ENCODE measurements at regions of chr5 and their contacts with region 1.

Region 1: DNA sequence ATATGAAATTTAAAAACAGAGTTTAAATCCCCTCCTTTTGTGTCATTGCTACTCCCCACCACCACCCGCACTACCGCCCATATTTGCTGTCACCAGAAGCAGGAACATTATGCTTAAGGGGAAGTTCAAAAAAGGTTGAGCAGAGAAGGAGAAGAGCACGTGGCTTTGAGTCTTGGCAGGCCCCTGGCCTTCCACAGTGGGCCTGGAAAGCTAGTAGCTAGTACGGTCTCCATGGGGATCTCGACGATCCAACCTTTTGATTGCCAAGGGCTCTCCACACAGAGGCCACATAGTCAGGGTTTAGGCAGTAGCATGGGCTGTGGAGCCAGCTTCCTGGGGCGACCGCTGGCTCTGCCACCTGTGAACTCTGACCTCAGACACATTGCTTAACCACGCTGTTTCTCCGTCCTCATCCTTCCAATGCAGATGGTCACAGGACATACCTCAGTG is 90.1 kb downstream of the GOLPH3 start:
- DNase-seq: no peak
- ATAC-seq: peak; percentile 41 to 78 (median 62)
- H3K4me3 ChIP-seq: no peak overlapping the region
- H3K27ac ChIP-seq: no peak overlapping the region
- H3K4me1 ChIP-seq: peaks cover 0 to 8% (median 0%) of the 10 kb centered on the region in 9 donors
- H3K27me3 ChIP-seq: no peaks in the 10 kb centered on the region
- CTCF ChIP-seq: no peak

Region 2: DNA sequence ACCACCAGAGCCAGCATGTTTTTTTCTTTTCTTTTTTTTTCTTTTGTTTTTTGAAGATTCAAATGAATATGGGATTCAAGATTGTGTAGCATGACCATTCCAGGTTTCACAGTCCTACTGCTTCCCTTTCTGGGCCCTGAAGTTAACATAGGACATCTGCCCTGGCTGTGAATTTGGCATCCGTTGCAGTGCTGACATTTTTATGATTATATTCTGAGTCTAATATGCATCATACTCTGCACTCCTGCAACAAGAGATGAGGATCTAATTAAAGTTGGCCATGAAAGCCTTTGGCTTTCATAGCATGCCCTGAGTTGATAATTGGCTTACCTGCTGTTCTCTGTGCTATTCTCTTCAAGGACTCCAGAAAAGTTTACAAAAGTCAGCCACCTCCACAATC is 522.1 kb before region 1 on chr5:
- intact Hi-C with region 1: loop called in 1 of 10 experiments (anchors 10 kb)
- DNase-seq: no peak
- ATAC-seq: peak in 1 of 8 donors; percentile 30
- H3K4me3 ChIP-seq: no peak overlapping the region
- H3K27ac ChIP-seq: no peak overlapping the region
- H3K4me1 ChIP-seq: peaks cover 0 to 15% (median 7%) of the 10 kb centered on the region in 9 donors
- H3K27me3 ChIP-seq: no peaks in the 10 kb centered on the region
- CTCF ChIP-seq: no peak

Region 3: GRCh38 chr5:31825518-31826068 is 258.4 kb before region 1 on chr5:
- intact Hi-C with region 1: loop called in 4 of 10 experiments (anchors 5 to 10 kb)
- DNase-seq: peak in 1 of 2 donors; percentile 61
- ATAC-seq: peak; percentile 69 to 92 (median 82)
- H3K4me3 ChIP-seq: no peak overlapping the region
- H3K27ac ChIP-seq: no peak overlapping the region
- H3K4me1 ChIP-seq: peaks cover 0 to 20% (median 13%) of the 10 kb centered on the region in 9 donors
- H3K27me3 ChIP-seq: no peaks in the 10 kb centered on the region
- CTCF ChIP-seq: peak; percentile 36 to 87 (median 71)

Region 4: DNA sequence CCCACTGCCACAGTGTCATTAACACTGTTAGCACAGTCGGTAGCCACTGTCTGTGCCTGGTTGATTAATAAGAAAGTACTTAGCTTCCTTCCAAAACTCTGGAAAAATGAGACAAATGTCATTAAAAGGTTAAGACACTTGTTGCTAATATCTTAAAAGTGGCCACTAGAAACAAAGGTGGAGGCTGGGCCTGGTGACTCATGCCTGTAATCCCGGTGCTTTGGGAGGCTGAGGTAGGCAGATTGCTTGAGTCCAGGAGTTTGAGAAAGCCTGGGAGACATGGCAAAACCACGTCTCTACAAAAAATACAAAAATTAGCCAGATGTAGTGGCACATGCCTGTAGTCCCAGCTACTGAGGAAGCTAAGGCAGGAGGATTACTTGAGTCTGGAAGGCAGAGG is 251.0 kb before region 1 on chr5:
- intact Hi-C with region 1: loop called in 4 of 10 experiments (anchors 5 to 10 kb)
- DNase-seq: no peak
- ATAC-seq: no peak
- H3K4me3 ChIP-seq: no peak overlapping the region
- H3K27ac ChIP-seq: no peak overlapping the region
- H3K4me1 ChIP-seq: no peaks in the 10 kb centered on the region
- H3K27me3 ChIP-seq: no peaks in the 10 kb centered on the region
- CTCF ChIP-seq: no peak

Region 5: DNA sequence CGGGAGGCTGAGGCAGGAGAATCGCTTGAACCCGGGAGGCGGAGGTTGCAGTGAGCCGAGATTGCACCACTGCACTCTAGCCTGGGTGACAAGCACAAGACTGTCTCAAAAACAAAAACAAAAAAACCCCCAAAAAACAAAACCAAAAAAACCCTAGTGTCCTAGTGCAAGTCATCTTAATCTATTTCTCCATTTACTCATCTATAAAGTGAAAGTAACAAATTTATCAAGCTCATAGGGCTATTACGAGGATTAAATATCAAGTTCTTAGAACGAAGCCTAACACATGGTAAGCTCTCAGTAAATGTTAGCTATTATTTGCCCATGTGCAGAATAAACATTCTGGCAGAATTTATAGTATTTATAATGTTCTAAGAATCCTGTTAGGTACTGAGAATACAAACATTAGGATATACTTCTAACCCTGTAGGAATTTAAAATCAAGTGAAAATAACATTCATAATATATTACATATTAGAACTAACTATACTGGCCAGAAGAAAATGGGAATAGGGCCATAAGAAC is 45.1 kb after region 1 on chr5:
- intact Hi-C with region 1: no loop called
- DNase-seq: no peak
- ATAC-seq: no peak
- H3K4me3 ChIP-seq: no peak overlapping the region
- H3K27ac ChIP-seq: no peak overlapping the region
- H3K4me1 ChIP-seq: peaks cover 0 to 83% (median 47%) of the 10 kb centered on the region in 9 donors
- H3K27me3 ChIP-seq: no peaks in the 10 kb centered on the region
- CTCF ChIP-seq: no peak

Measured in heart right ventricle (tissue), 16 donors.